Transverse colon (tissue), 4 donors: ENCODE measurements at regions of chr21 and their contacts with region 1.

Region 1: DNA sequence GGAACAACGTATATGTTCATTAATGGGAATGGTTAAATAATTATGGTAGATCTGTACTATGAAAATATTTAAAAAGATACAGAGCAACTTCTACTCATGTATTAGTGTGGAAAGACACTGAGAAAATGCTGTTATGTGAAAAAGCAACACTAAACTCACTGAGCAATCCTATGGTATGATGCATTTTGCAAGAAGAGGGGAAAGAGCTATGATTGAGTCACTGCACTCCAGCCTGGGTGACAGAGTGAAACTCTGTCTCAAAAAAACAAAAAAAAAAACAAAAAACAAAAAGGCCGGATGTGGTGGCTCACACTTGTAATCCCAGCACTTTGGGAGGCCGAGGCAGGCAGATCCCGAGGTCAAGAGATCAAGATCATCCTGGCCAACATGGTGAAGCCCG is 44.4 kb downstream of the ATP5PO start:
- DNase-seq: no peak
- H3K4me3 ChIP-seq: no peak overlapping the region
- H3K27ac ChIP-seq: no peak overlapping the region
- H3K4me1 ChIP-seq: no peaks in the 10 kb centered on the region
- H3K27me3 ChIP-seq: no peaks in the 10 kb centered on the region
- CTCF ChIP-seq: no peak
- EP300 ChIP-seq: no peak
- POLR2A ChIP-seq: no peak

Region 2: DNA sequence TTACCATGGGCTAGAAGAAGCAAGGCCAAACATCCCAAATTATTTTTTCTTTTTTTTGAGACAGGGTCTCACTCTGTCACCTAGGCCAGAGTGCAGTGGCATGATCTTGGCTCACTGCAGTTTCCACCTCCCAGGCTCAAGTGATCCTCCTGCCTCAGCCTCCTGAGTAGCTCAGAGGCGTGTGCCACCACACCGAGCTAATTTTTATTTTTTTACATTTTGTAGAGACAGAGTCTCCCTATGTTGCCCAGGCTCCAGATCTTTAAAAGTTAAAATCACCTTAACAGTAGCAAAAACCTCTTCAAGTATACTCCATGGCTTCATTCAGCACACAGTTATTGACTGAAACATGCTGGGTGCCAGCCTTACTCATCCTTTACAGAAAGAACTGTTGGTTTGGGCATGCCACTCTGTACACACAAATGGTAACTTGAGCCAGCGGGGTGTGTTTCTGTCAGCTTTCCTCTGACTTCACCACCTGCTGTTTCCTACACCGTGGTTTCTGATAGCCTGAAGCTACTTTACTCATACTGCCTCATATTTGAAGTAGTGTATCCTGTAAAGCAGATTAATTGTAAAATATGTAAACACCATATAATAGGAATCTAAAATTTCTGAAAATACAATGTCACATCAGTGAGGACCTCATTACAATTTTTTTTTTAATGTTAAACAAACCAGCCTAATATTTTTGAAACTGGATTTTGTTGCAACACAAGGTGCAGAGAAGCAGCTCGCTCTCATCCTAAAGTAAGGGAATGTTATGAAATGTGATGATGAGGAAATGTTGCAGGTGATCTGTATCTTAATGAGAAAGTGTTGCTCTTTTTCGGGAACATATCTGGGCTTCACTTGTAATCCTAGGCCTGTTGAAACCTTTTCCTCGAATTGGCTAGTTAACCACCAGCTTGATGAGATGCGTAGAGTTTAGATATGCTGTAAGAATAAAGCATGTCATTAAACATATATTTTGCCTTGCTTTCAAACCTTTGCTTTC is 69.4 kb before region 1 on chr21:
- in situ Hi-C with region 1: no loop called
- intact Hi-C with region 1: loop called (anchors 2 kb)
- DNase-seq: no peak
- H3K4me3 ChIP-seq: no peak overlapping the region
- H3K27ac ChIP-seq: peak overlapping the region in 3 of 4 donors; percentile 17 to 50 (median 31)
- H3K4me1 ChIP-seq: peaks cover 0 to 3% (median 2%) of the 10 kb centered on the region in 4 donors
- H3K27me3 ChIP-seq: no peaks in the 10 kb centered on the region
- CTCF ChIP-seq: no peak
- EP300 ChIP-seq: no peak
- POLR2A ChIP-seq: no peak